G401 (cell line): ENCODE measurements at regions of chr15 and their contacts with region 1.

Region 1: DNA sequence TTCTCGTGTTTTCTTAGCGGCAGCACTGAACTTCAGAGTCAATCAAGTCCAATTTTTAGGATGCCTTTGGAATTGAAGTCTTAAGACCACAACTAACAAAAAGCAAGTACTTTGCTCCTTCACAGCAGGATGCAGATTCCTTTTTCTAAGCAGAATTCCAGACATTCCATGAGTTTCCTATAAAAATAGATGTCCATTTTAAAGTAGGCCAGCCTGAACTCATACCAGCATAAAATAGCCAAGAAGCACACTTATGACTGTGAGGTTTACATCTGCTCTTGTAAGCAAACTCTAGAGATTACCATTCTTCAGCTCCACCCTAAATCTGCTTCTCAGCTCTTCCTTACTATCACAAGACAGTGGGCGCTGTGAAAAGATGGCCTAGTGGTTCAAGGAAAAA is 85.8 kb downstream of the THBS1 start:
- DNase-seq: peak; percentile 24

Region 2: GRCh38 chr15:39720621-39721611 is 54.2 kb after region 1 on chr15:
- in situ Hi-C with region 1: loop called (anchors 5 kb)
- DNase-seq: no peak